H1 (cell line): ENCODE measurements at regions of chr9 and their contacts with region 1.

Region 1: DNA sequence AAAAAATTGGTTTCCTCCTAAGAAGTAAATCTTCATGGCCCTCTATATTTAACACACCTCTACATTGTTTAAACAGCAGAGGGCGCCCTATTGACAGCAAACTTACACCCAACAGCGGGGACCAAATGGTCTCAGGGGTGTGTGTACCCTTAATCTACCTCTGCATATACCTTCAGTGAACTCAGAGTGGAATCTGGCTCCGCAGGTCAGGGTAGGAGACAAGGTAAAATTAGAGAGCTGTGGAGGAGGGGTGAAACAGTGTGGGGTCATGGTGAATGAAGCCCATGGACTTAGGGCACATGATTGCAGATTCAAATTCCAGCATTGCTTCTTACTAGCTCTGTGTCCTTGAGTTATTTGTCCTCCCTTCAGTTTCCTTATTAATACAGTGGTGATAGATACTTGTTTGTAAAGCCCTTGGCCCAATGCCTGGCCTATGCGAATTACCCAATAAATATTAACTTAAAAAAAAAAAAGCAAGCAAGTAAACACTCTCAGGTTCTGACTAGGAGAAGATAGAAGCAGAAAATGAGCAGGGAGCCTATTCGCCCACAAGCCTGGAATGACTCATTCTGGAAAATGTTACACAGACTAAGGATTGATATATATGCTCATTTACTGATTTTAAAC is 122.9 kb downstream of the CAVIN4 start:
- DNase-seq: peak in 1 of 2 experiments; percentile 61
- H3K4me3 ChIP-seq: no peak overlapping the region
- H3K27ac ChIP-seq: no peak overlapping the region
- H3K4me1 ChIP-seq: peaks cover 0 to 6% (median 5%) of the 10 kb centered on the region in 4 experiments; a peak in 4 of 7 replicates
- H3K27me3 ChIP-seq: no peaks in the 10 kb centered on the region
- CTCF ChIP-seq: peak; percentile 33 to 71 (median 70)
- EP300 ChIP-seq: no peak
- POLR2A ChIP-seq: no peak
- RAD21 ChIP-seq: peak; percentile 82 to 84

Region 2: DNA sequence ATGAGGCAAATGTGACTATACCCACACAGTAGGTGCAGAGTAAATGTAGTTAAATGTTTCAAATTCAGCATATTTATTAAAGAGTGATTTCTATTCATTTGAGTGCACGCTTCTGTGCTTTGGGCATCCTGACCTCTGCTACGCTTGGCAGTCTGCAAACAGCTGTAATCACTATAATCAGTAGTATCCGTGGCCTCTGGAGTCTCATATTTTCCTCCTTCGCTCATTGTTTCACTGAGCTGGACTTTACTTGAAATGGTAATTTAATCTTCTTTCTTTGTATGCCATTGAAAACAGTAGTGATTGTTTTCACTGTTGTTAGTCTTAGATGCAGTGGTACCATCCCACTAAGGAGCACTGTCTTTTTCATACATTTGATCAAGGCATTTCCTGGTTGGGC is 166.4 kb before region 1 on chr9:
- CTCF ChIA-PET with region 1: no interaction called
- POLR2A ChIA-PET with region 1: no interaction called
- DNase-seq: no peak
- H3K4me3 ChIP-seq: no peak overlapping the region
- H3K27ac ChIP-seq: no peak overlapping the region
- H3K4me1 ChIP-seq: no peaks in the 10 kb centered on the region
- H3K27me3 ChIP-seq: no peaks in the 10 kb centered on the region
- CTCF ChIP-seq: no peak
- EP300 ChIP-seq: no peak
- POLR2A ChIP-seq: no peak
- RAD21 ChIP-seq: no peak

Region 3: DNA sequence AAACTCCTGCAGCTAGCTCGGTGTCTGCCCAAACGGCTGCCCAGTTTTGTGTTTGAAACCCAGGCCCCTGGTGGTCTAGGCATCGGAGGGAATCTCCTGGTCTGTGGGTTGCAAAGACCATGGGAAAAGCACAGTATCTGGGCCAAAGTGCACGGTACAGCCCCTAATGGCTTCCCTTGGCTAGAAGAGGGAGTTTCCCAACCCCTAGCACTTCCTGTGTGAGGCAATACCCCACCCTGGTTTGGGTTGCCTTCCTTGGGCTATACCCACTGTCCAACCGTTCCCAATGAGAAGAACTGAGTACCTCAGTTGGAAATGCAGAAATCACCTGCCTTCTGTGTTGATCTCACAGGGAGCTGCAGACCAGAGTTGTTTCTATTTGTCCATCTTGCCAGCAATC is 81.1 kb before region 1 on chr9:
- CTCF ChIA-PET with region 1: interaction called, 13 read pairs
- POLR2A ChIA-PET with region 1: no interaction called
- DNase-seq: no peak
- H3K4me3 ChIP-seq: no peak overlapping the region
- H3K27ac ChIP-seq: no peak overlapping the region
- H3K4me1 ChIP-seq: no peaks in the 10 kb centered on the region
- H3K27me3 ChIP-seq: no peaks in the 10 kb centered on the region
- CTCF ChIP-seq: no peak
- EP300 ChIP-seq: no peak
- POLR2A ChIP-seq: no peak
- RAD21 ChIP-seq: no peak

Region 4: GRCh38 chr9:100714372-100715099 is 13.7 kb after region 1 on chr9:
- CTCF ChIA-PET with region 1: interaction called, 90 read pairs
- POLR2A ChIA-PET with region 1: no interaction called
- DNase-seq: peak; percentile 17 to 88
- H3K4me3 ChIP-seq: no peak overlapping the region
- H3K27ac ChIP-seq: no peak overlapping the region
- H3K4me1 ChIP-seq: no peaks in the 10 kb centered on the region
- H3K27me3 ChIP-seq: no peaks in the 10 kb centered on the region
- CTCF ChIP-seq: peak; percentile 76 to 85 (median 83)
- EP300 ChIP-seq: no peak
- POLR2A ChIP-seq: no peak
- RAD21 ChIP-seq: peak; percentile 95 to 97

Region 5: GRCh38 chr9:100784755-100785154 is 84.0 kb after region 1 on chr9:
- CTCF ChIA-PET with region 1: no interaction called
- POLR2A ChIA-PET with region 1: no interaction called
- DNase-seq: no peak
- H3K4me3 ChIP-seq: no peak overlapping the region
- H3K27ac ChIP-seq: no peak overlapping the region
- H3K4me1 ChIP-seq: no peaks in the 10 kb centered on the region
- H3K27me3 ChIP-seq: no peaks in the 10 kb centered on the region
- CTCF ChIP-seq: no peak
- EP300 ChIP-seq: no peak
- POLR2A ChIP-seq: no peak
- RAD21 ChIP-seq: no peak

Region 6: DNA sequence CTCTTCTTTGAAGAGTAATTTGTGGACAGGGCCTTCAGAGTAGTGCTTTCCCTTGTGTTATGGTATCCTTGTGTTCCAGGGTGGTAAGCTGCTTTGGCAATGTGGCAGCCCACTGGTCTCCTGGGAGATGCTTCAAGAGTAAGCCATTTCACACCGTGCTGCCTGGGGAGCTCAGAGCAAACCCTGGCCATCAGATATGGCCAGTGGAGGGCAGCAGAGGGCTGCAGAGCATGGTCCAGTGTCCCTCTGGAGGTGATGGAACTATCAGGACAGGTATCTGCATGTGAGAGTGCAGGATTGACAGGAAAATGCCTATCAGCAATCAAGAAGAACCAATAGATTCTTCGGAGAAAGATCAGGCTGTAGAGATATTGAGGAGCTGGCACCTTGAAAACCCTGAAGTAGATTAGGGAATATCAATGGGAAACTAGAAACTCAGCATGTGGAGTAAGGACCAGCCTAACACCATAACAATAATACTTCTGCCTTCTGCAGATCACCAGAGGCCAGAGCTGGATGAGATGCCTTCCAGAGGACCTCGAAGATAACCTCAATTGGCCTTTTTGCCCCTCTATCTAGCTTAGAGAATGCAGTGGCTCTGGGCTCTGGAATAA is 418.5 kb after region 1 on chr9:
- CTCF ChIA-PET with region 1: interaction called, 25 read pairs
- POLR2A ChIA-PET with region 1: no interaction called
- DNase-seq: peak in 1 of 2 experiments; percentile 92
- H3K4me3 ChIP-seq: no peak overlapping the region
- H3K27ac ChIP-seq: no peak overlapping the region
- H3K4me1 ChIP-seq: peaks cover 0 to 7% (median 3%) of the 10 kb centered on the region in 4 experiments; a peak in 4 of 7 replicates
- H3K27me3 ChIP-seq: no peaks in the 10 kb centered on the region
- CTCF ChIP-seq: peak; percentile 96 to 99 (median 98)
- EP300 ChIP-seq: no peak
- POLR2A ChIP-seq: no peak
- RAD21 ChIP-seq: peak; percentile 96 to 99

Region 7: DNA sequence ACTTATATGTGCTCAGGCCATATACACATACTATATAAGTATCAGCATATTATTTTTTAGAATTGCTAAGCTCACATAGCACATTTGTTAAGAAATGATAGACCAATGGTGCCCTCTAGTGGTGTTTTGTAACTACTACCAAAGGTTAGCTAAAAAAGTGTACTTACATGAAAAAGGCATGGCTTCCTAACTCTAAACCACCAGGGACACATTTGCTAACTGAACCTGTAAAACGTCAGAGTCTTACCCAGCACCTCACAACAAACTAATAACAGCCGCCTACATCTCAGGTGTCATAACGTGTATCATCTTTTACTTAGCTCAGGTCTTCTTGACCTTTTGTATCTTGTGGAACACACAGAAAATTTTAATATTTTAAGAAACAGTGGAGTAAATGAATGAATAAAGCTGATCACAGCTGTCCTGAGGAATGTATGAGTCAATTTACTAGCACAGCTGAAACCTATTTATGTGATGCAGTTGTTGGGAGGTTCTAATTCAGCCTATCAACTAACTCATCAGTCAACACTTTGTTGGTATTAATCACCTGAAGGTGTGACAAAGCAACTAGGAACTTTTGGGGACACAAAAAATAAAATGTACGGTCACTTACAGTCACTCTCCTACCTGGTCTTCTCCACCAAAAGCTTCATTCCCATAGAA is 611.1 kb after region 1 on chr9:
- CTCF ChIA-PET with region 1: interaction called, 21 read pairs
- POLR2A ChIA-PET with region 1: no interaction called
- DNase-seq: no peak
- H3K4me3 ChIP-seq: no peak overlapping the region
- H3K27ac ChIP-seq: no peak overlapping the region
- H3K4me1 ChIP-seq: no peaks in the 10 kb centered on the region
- H3K27me3 ChIP-seq: no peaks in the 10 kb centered on the region
- CTCF ChIP-seq: peak in 2 of 3 experiments; percentile 53 to 65; a peak in 2 of 4 replicates
- EP300 ChIP-seq: no peak
- POLR2A ChIP-seq: no peak
- RAD21 ChIP-seq: peak; percentile 80 to 83